ENCODE measurements at regions of chr17 and their contacts with region 1.

Region 1: GRCh38 chr17:50865984-50866774 is at the start of gene TOB1:
- DNase-seq: peak; percentile 99
- ATAC-seq: peak; percentile 88 to 93 (median 91)
- H3K4me3 ChIP-seq: peak within 1 kb of the TSS; percentile 75 to 97 (median 90)
- H3K27ac ChIP-seq: peak within 1 kb of the TSS; percentile 99 to 100 (median 100)
- H3K4me1 ChIP-seq: peaks cover 2 to 54% (median 32%) of the 10 kb centered on the region in 12 donors
- H3K27me3 ChIP-seq: no peaks in the 10 kb centered on the region
- CTCF ChIP-seq: no peak
- POLR2A ChIP-seq: peak; percentile 98 to 100
- total RNA-seq, gene TOB1: 38.3 to 136 (median 88.7) TPM

Region 2: DNA sequence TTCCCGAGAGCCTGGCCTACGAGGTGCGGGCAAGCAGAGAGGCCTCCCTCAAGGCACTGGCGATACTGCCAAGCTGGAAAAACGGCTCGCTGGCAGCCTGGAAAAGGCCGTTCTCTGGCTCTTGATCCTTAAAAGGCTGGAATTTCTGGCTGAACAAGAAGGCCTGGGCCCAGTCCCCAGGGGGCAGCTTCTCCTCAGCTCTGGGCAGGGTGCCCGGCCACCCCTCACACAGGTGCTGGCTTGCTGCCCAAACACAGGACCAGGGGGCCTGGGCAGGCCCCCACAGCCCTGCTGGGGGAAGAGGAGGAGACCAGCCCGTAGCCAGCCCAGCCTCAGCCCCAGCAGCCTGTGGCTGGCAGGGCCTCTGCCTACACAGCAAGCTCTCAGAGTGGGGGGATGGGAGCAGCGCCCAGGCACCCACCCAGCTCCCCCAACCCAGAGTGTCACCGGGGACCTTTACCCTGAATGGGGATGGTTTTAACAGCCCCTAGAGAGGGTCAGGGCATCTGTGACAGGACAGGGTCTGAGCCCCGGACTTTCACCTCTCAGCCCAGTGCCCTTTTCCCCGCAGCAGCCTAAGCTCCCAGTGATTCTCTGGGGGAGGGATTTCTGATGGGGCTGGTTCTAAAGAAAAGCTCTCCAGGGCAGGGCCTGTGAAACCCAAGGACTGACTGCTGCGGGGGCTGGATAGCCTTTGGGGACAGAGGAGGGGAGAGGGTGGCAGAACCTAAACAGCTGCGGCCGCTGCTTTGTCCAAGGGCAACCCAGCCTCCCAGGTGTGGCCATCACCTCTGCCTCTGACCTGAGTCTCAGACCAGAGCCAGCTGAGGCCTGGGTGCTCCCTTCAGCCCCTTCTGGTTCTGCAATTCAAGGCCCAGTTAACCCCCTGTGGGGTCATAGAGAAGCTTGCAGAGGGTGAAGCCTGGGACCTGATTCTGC is 38.6 kb after region 1 on chr17:
- intact Hi-C with region 1: loop called in 3 of 10 experiments (anchors 2 to 5 kb)
- DNase-seq: peak in 3 of 5 donors; percentile 45 to 55 (median 50)
- ATAC-seq: peak; percentile 30 to 68 (median 64)
- H3K4me3 ChIP-seq: no peak overlapping the region
- H3K27ac ChIP-seq: peak overlapping the region; percentile 45 to 95 (median 85)
- H3K4me1 ChIP-seq: peaks cover 0 to 41% (median 29%) of the 10 kb centered on the region in 12 donors
- H3K27me3 ChIP-seq: no peaks in the 10 kb centered on the region
- CTCF ChIP-seq: peak in 1 of 12 donors; percentile 9
- POLR2A ChIP-seq: no peak

Region 3: GRCh38 chr17:50931144-50931908 is 65.1 kb after region 1 on chr17:
- intact Hi-C with region 1: loop called in 9 of 10 experiments (anchors 1 to 5 kb)
- DNase-seq: peak; percentile 89 to 96 (median 92)
- ATAC-seq: peak; percentile 92 to 95 (median 94)
- H3K4me3 ChIP-seq: peak overlapping the region; percentile 18 to 63 (median 54)
- H3K27ac ChIP-seq: peak overlapping the region; percentile 93 to 100 (median 98)
- H3K4me1 ChIP-seq: peaks cover 0 to 46% (median 23%) of the 10 kb centered on the region in 12 donors
- H3K27me3 ChIP-seq: no peaks in the 10 kb centered on the region
- CTCF ChIP-seq: no peak
- POLR2A ChIP-seq: peak in 1 of 2 donors; percentile 20

Region 4: DNA sequence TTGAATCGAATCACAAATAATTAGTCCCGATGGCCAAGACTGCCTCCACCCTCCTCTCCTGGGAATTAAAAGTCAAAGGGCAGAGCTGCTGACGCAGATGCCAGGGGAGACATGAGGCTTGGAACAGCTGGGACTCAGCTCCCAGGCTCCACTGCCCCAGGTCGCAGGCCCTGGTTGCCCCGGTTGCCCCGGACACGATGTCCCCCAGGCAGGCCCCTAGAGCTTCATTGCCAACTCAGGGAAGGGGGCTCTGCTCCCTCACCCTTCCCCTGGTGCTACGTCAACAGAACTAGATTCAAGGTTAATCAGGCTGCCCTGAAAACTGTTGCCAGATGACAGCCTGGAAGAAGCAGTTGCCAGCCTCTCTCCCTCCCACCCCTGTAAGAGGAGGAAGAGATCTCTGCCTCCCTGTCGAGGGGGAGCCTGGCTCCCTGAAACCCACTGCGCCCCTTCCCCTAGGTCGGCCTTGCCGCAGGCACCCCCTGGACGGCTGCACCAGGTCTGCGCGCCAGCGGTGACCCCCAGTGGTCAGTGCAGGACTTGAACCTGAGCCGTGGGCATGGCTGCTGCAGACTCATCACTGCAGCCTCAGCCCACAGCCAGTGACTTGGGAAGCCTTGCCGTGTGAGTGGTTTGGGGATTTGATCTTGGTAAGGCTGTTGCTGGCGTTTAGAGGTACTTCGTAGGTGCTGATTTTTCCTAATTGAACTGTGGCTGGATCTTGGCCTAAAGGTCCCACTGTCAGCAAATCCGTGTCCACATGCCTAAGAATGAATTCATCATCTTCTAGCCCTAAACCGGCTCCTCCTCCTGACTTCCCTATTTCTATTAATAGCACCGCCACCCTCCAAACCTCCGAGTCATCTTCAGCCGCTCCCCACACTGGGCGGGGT is 84.1 kb after region 1 on chr17:
- intact Hi-C with region 1: loop called in 4 of 10 experiments (anchors 2 to 5 kb)
- DNase-seq: peak; percentile 77 to 90 (median 86)
- ATAC-seq: peak; percentile 78 to 88 (median 86)
- H3K4me3 ChIP-seq: peak overlapping the region in 3 of 12 donors; percentile 0 to 16 (median 2)
- H3K27ac ChIP-seq: peak overlapping the region; percentile 71 to 91 (median 82)
- H3K4me1 ChIP-seq: peaks cover 0 to 67% (median 46%) of the 10 kb centered on the region in 12 donors
- H3K27me3 ChIP-seq: no peaks in the 10 kb centered on the region
- CTCF ChIP-seq: peak; percentile 62 to 87 (median 81)
- POLR2A ChIP-seq: no peak

Region 5: GRCh38 chr17:51166197-51166986 is 300.2 kb after region 1 on chr17 and contains the start of gene NME2:
- intact Hi-C with region 1: loop called in 2 of 10 experiments (anchors 10 kb)
- DNase-seq: peak; percentile 91 to 95 (median 94)
- ATAC-seq: peak; percentile 89 to 97 (median 97)
- H3K4me3 ChIP-seq: peak within 1 kb of the TSS; percentile 76 to 95 (median 90)
- H3K27ac ChIP-seq: peak within 1 kb of the TSS; percentile 73 to 99 (median 95)
- H3K4me1 ChIP-seq: peaks cover 0 to 20% (median 14%) of the 10 kb centered on the region in 12 donors
- H3K27me3 ChIP-seq: no peaks in the 10 kb centered on the region
- CTCF ChIP-seq: no peak
- POLR2A ChIP-seq: peak in 1 of 2 donors; percentile 65
- total RNA-seq, gene NME2: 171 to 386 (median 245) TPM

Region 6: GRCh38 chr17:51322390-51323029 is 456.3 kb after region 1 on chr17:
- intact Hi-C with region 1: no loop called
- DNase-seq: no peak
- ATAC-seq: no peak
- H3K4me3 ChIP-seq: no peak overlapping the region
- H3K27ac ChIP-seq: no peak overlapping the region
- H3K4me1 ChIP-seq: no peaks in the 10 kb centered on the region
- H3K27me3 ChIP-seq: peaks cover 0 to 7% (median 0%) of the 10 kb centered on the region in 9 donors
- CTCF ChIP-seq: peak in 3 of 12 donors; percentile 26 to 31 (median 27)
- POLR2A ChIP-seq: no peak

Measured in heart left ventricle (tissue), 16 donors.